ENCODE measurements at regions of chr5 and their contacts with region 1.

Region 1: DNA sequence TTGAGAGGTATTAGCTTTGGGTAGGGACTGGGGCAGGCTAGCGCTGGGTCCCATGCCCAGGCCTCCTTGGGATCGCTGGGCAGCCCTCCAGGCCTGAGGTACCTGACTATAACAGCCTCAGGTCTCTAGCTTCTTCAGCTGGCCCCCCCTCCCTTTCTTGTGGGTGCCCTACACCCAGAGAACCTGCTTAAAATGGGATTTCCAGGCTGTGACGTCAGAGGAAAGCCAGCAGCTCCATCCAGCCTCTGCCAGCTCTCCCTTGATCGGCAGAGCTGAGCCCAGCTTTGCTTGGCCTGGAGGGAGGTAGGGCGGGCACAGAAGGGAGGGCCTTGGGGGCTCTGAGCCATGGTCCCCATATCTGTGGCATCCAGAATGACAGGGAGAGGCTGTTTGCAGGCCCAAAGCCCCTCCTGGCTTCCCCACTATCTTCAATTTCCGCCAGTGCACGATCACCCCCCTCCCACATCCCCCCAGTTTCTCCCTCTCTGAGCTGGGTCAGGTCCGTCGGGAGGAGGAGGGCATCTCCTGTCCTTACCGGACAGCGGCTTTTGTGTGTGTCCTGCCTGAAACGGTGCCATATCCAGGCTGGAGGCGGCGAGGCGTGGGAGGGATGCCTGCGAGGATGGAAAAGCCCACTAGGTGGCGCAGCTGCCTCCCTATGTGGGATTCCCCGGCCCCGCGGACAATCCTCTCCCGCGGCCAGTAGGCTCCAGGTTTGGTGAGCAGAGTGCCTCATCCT is 10.8 kb downstream of the REEP2 start:
- DNase-seq: peak; percentile 81 to 96
- ATAC-seq: peak; percentile 86 to 96
- H3K4me3 ChIP-seq: no peak overlapping the region
- H3K27ac ChIP-seq: peak overlapping the region; percentile 19 to 69; a peak in 4 of 6 replicates
- H3K4me1 ChIP-seq: peaks cover 9% of the 10 kb centered on the region; the same call in 1 of the 3 replicates
- CTCF ChIP-seq: peak; percentile 86
- EP300 ChIP-seq: no peak
- POLR2A ChIP-seq: no peak
- RAD21 ChIP-seq: peak; percentile 81 to 85

Region 2: DNA sequence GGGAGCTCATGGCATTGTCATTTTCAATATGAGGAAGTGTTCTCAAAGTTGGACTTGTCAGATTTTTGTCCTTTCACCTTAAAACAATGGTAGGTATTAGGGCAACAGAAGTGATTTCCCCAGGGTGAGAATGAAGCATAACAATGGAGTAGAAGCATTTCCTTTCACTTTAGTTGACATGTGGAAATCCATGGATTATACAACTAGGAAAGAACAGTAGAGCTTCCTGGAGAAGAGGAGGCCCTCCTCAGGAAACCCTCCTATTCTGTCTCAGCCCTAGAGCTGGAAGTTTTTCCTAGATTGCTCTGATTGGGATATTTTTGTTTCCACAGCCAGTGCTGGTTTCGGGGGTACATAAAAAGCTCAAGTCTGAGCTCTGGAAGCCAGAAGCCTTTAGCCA is 24.6 kb before region 1 on chr5:
- CTCF ChIA-PET with region 1: interaction called, 22 read pairs
- POLR2A ChIA-PET with region 1: no interaction called
- DNase-seq: no peak
- ATAC-seq: no peak
- H3K4me3 ChIP-seq: no peak overlapping the region
- H3K27ac ChIP-seq: no peak overlapping the region
- H3K4me1 ChIP-seq: no peaks in the 10 kb centered on the region
- CTCF ChIP-seq: no peak
- EP300 ChIP-seq: no peak
- POLR2A ChIP-seq: no peak
- RAD21 ChIP-seq: no peak

Region 3: GRCh38 chr5:138464008-138464387 is 14.3 kb after region 1 on chr5:
- CTCF ChIA-PET with region 1: interaction called, 125 read pairs
- POLR2A ChIA-PET with region 1: interaction called, 13 read pairs
- DNase-seq: peak; percentile 94 to 95
- ATAC-seq: peak; percentile 44 to 67
- H3K4me3 ChIP-seq: peak overlapping the region; percentile 66
- H3K27ac ChIP-seq: peak overlapping the region; percentile 95 to 96
- H3K4me1 ChIP-seq: peaks cover 12% of the 10 kb centered on the region
- CTCF ChIP-seq: peak; percentile 90
- EP300 ChIP-seq: no peak
- POLR2A ChIP-seq: peak; percentile 64
- RAD21 ChIP-seq: peak; percentile 31 to 71

Region 4: DNA sequence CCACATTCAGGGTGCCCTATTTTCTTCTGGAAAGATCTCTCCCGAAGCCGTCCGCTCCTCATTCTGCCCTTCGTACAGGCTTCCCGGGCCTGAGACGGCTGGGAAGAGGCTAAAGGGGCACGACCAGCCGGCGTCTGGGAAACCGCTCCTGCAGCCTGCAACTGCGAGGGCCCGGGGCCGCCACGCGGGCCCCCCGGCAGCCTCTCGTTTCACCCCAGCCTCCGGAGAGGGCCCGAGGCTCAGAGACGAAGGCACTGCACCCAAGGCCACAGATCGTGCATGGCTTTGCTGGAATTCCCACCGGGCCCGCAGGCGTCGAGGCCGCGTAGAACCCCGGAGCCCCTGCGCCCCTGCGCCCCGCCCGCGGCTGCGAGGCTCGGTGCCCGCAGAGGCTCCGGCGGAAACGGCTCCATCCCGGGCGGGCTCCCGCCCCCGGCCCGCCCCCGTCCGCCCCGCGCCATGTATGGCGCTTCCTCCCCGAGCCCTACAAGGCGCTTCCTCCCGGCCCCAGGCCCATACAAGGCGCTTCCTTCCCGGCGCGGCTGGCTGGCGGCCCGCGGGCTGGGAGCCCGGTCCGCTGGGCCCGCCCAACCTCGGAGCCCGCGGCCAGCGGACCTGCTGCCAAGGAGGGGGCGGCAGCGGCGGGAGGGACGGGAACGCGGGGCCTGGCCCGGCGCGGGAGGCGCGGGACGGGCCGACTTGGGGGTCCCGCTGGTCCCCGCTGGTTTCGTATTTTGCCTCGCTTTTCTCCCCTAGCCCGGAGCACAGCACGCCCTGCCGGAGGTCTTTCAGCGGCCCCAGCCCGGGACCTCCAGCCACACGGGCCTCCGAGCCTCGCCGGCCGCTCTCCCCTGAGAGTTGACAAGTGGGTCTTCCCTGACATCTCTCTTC is 42.2 kb after region 1 on chr5:
- CTCF ChIA-PET with region 1: interaction called, 203 read pairs
- POLR2A ChIA-PET with region 1: no interaction called
- DNase-seq: peak; percentile 54 to 69
- ATAC-seq: peak; percentile 81 to 86
- H3K4me3 ChIP-seq: peak overlapping the region; percentile 50
- H3K27ac ChIP-seq: peak overlapping the region; percentile 70 to 88
- H3K4me1 ChIP-seq: peaks cover 9% of the 10 kb centered on the region; the same call in 1 of the 3 replicates
- CTCF ChIP-seq: no peak
- EP300 ChIP-seq: no peak
- POLR2A ChIP-seq: no peak
- RAD21 ChIP-seq: no peak

Region 5: GRCh38 chr5:138528208-138528607 is 78.5 kb after region 1 on chr5:
- CTCF ChIA-PET with region 1: interaction called, 13 read pairs
- POLR2A ChIA-PET with region 1: no interaction called
- DNase-seq: no peak
- ATAC-seq: peak in 1 of 2 experiments; percentile 20; a peak in 2 of 6 replicates
- H3K4me3 ChIP-seq: no peak overlapping the region
- H3K27ac ChIP-seq: no peak overlapping the region
- H3K4me1 ChIP-seq: peaks cover 19% of the 10 kb centered on the region; the same call in 2 of the 3 replicates
- CTCF ChIP-seq: no peak
- EP300 ChIP-seq: no peak
- POLR2A ChIP-seq: no peak
- RAD21 ChIP-seq: no peak